ENCODE measurements at regions of chr1 and their contacts with region 1.

Region 1: DNA sequence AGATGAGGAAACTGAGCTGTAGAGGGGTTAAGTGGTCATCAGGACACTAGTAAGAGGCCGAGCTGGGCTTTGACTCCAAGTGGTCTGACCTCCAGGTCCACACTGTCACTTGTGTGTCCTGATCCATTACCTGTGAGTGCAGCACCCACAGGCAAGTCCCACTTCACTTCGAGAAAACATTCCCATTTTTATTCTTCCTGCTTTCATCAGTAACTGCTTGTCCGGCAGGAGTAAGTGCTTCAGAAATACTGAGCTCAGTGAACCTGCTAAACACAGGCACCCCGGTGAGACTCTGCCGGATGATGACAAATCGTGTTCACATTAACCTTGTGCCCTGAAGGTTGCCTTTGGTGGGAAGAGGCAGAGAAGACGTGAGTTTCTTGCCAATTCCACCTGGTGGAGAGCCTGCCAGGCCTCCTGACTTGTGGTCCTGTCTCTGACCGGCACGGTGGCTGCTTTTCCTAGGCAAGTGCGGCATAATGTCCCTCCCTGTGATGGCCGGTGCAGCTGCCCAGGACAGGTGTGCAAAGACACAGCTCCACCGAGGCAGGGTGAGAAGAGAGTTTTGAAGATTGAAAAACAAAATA is 29.4 kb downstream of the ZBTB18 start:
- DNase-seq: no peak
- ATAC-seq: no peak

Region 2: GRCh38 chr1:244137725-244138124 is 57.3 kb after region 1 on chr1:
- intact Hi-C with region 1: loop called in 1 of 2 experiments (anchors 10 kb)
- DNase-seq: no peak
- ATAC-seq: no peak

Region 3: DNA sequence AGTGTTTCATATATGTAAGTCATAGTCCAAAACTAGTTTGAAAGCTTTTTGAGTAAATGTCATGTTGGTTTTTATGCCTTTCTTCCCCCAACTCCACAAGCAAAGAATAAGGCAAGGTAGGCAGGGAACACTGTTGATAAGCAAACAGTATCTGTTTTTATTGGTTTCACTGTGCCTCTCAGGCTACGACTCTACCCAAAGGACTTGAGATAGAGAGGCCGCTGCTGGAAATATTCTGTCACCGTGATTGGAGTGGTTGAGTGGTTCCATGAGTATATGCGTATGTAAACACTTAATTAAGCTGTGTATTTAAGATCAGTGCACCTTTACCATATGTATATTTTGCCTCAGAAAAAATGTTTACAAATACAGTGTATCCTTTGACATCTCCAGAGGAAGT is 936.3 kb after region 1 on chr1:
- intact Hi-C with region 1: no loop called
- DNase-seq: no peak
- ATAC-seq: peak in 1 of 2 donors; percentile 21

Measured in left cardiac atrium (tissue), 4 donors.